OCI-LY7 (cell line): ENCODE measurements at regions of chr4 and their contacts with region 1.

Region 1: DNA sequence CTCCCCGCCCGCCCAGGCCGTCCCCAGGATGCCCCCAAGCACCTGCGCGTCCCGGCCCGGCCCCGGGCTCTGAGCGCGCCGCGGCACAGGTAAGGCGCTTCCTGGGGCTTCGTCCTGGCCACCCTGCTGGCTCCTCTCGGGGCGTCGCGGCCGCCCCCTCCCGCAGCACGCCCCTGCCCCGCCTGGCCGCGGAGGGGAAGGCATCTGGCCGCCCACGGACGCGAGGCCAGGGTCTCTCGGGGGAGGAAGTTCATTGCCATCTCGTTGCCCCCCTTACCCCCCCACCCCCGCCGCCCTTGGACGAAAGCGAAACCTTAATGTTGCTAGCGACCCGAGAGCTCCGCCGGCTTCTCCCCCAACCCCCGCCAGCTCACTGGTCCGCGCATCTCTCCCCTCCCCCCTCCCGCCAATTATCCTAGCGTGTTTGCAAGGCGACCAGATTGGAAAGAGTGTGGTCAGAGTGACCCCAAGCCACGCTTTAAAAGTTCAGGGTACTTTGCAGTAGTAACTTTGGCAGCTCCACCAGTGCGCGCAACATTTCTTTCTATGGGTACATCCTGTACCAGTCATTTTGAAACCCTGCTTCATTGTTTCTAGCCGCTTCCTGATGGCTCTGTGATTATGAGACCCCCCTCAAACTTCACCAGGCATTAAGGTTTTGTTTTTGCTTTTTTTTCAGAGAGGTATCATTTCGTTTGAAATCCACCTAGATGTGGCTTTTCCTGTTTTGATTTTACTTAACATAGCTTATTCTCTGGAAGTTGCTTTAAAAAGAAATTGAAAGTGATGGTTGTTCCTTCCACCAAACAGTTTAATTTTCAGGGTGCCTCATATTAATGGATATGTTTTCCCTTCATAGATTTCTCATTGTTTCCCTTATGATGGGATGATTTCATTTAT is 626 bp downstream of the TBC1D1 start:
- DNase-seq: peak; percentile 78
- H3K4me3 ChIP-seq: peak overlapping the region; percentile 76
- H3K27ac ChIP-seq: peak overlapping the region; percentile 78
- H3K4me1 ChIP-seq: peaks cover 33% of the 10 kb centered on the region
- CTCF ChIP-seq: peak; percentile 37; the same call in 1 of the 2 replicates

Region 2: DNA sequence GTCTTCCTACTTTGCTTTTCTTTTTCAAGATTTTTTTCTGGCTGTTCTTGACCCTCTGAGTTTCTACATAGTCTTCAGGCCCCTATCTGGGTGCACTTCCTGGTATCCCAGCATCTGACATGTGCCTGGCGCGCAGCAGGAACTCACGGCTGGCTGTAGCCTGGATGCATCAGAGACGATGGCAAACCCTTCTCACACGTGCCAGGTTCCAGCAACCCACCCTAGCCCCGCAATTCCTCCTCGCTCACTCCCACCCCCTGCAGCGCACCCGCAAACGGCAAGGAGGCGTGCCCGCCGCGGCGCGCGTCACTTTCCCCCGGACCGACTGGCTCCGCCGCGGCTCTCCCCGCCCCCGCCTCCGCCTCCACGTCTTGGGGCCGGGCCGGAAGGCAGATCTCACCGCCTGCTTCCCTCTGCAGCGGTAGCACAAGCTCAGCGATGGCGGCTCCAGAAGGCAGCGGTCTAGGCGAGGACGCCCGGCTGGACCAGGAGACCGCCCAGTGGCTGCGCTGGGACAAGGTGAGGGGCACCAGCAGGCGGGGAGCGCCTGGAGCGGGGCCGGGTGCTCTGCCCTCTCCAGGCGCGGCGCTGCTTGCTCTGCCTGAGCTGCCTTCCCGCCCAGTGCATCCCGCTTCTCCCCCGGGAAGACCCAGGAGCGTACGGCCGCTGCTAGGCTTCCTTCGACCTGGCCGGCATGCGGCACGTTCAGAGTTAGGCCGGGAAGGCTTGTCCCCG is 65.0 kb before region 1 on chr4 and contains the start of gene PGM2:
- CTCF ChIA-PET with region 1: no interaction called
- POLR2A ChIA-PET with region 1: interaction called, 8 read pairs
- intact Hi-C with region 1: loop called (anchors 2 kb)
- DNase-seq: peak; percentile 92
- H3K4me3 ChIP-seq: peak within 1 kb of the TSS; percentile 91
- H3K27ac ChIP-seq: peak within 1 kb of the TSS; percentile 60
- H3K4me1 ChIP-seq: peaks cover 30% of the 10 kb centered on the region
- CTCF ChIP-seq: 0 out of 2 replicates have a peak, but pooled peaks have one; percentile 21
- total RNA-seq, gene PGM2: 52.7 and 67.4 TPM in 2 replicates

Region 3: DNA sequence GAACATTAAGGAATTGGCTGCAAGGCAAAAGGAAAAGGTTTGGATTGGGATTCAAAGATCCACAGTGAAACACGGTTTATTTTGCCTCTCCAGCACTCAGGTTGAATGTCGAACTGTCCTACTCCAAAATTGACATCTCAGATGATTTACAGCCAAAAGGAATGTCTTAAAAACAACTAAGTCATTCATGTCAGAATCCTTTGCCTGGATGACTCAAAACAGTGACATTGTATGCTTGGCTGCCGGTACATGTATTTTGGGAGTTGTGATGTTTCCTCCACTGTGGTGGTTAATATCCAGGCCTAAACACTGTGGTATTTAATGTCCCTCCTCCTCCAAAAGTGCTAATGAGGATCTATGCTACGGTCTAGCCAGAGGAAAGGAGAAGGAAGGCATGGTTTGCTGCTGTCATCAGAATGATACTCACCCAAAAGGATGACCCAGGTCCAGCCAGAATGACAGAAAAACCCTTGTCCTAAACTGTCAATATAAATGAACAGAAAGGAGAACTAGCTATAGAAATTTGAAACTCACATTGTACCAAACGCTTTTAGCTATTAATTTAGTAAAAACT is 44.1 kb before region 1 on chr4:
- CTCF ChIA-PET with region 1: interaction called, 7 read pairs
- POLR2A ChIA-PET with region 1: interaction called, 32 read pairs
- intact Hi-C with region 1: loop called (anchors 1 kb)
- DNase-seq: no peak
- H3K4me3 ChIP-seq: peak overlapping the region; percentile 36
- H3K27ac ChIP-seq: peak overlapping the region; percentile 93
- H3K4me1 ChIP-seq: peaks cover 76% of the 10 kb centered on the region
- CTCF ChIP-seq: no peak

Region 4: DNA sequence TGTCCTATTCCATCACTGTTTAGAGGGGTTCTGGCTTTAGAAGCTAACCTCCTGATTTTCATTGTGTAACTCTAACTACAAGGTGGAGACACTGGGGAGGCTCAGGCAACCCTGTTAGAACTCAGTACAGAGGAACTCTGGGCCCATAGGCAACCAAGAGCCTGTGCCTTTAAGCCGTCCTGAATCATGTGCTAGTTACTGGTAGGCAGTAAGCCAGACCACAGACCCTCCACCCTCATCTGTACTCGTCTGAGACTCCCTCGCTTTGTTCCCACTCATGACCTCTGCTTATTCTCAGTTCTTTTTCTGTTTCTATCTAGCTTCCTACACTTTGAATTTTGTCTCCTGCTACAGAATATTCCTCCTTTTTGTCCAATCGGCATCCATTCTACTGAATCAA is 30.8 kb after region 1 on chr4:
- CTCF ChIA-PET with region 1: interaction called, 3 read pairs
- POLR2A ChIA-PET with region 1: no interaction called
- intact Hi-C with region 1: loop called (anchors 1 kb)
- DNase-seq: no peak
- H3K4me3 ChIP-seq: no peak overlapping the region
- H3K27ac ChIP-seq: no peak overlapping the region
- H3K4me1 ChIP-seq: no peaks in the 10 kb centered on the region
- CTCF ChIP-seq: no peak